ENCODE measurements at regions of chr20 and their contacts with region 1.

Region 1: GRCh38 chr20:53547664-53548239 is 45.9 kb downstream of the ZNF217 start:
- DNase-seq: peak; percentile 76
- ATAC-seq: peak; percentile 94
- H3K4me3 ChIP-seq: no peak overlapping the region
- H3K27ac ChIP-seq: no peak overlapping the region
- H3K4me1 ChIP-seq: peaks cover 6% of the 10 kb centered on the region
- H3K27me3 ChIP-seq: no peaks in the 10 kb centered on the region
- CTCF ChIP-seq: peak; percentile 93
- POLR2A ChIP-seq: no peak
- RAD21 ChIP-seq: peak; percentile 92

Region 2: GRCh38 chr20:52127309-52127708 is 1420.4 kb before region 1 on chr20:
- CTCF ChIA-PET with region 1: no interaction called
- POLR2A ChIA-PET with region 1: no interaction called
- dilution Hi-C with region 1: no loop called
- in situ Hi-C with region 1: no loop called
- intact Hi-C with region 1: loop called (anchors 1 kb)
- DNase-seq: no peak
- ATAC-seq: no peak
- H3K4me3 ChIP-seq: no peak overlapping the region
- H3K27ac ChIP-seq: no peak overlapping the region
- H3K4me1 ChIP-seq: no peaks in the 10 kb centered on the region; the same call in 1 of the 2 replicates
- H3K27me3 ChIP-seq: no peaks in the 10 kb centered on the region
- CTCF ChIP-seq: no peak
- POLR2A ChIP-seq: no peak
- RAD21 ChIP-seq: no peak

Region 3: DNA sequence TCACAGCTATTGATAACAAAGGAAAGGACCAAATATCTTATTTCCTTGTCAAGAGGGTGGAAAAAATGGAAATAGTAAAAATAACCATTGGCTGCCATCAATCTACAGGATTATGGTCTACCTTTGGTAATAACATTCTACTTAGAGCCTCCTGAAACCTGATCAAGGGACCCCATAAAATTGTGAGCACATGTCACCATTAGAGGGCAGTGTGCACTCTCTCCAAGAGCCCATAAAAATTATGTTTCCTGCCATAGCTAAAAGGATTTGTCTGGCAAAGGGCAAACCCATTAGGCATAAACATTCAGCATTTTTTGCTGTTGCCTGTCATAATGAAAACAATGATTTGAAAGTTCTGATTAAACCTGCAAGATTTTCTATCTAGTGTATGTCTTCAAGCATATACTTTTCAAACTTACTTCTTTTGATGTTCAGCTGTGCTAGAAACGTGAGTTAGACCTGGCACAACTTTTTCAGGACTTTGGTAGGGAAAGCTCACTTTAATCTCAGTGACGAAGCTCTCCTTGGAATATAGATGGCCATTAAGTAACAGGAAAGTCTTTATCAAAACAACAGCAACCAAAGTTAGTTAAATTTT is 1235.5 kb before region 1 on chr20:
- CTCF ChIA-PET with region 1: interaction called, 14 read pairs
- POLR2A ChIA-PET with region 1: no interaction called
- dilution Hi-C with region 1: no loop called
- in situ Hi-C with region 1: loop called (anchors 10 kb)
- intact Hi-C with region 1: loop called (anchors 1 kb)
- DNase-seq: peak; percentile 60
- ATAC-seq: peak; percentile 89
- H3K4me3 ChIP-seq: no peak overlapping the region
- H3K27ac ChIP-seq: no peak overlapping the region
- H3K4me1 ChIP-seq: no peaks in the 10 kb centered on the region
- H3K27me3 ChIP-seq: peaks cover 3% of the 10 kb centered on the region
- CTCF ChIP-seq: peak; percentile 76
- POLR2A ChIP-seq: no peak
- RAD21 ChIP-seq: peak; percentile 79

Region 4: GRCh38 chr20:53157443-53158408 is 390.0 kb before region 1 on chr20:
- CTCF ChIA-PET with region 1: interaction called, 3 read pairs
- POLR2A ChIA-PET with region 1: no interaction called
- dilution Hi-C with region 1: no loop called
- in situ Hi-C with region 1: no loop called
- intact Hi-C with region 1: loop called (anchors 1 kb)
- DNase-seq: peak; percentile 53
- ATAC-seq: peak; percentile 63; the same call in 1 of the 2 replicates
- H3K4me3 ChIP-seq: no peak overlapping the region
- H3K27ac ChIP-seq: no peak overlapping the region
- H3K4me1 ChIP-seq: no peaks in the 10 kb centered on the region
- H3K27me3 ChIP-seq: no peaks in the 10 kb centered on the region
- CTCF ChIP-seq: peak; percentile 53
- POLR2A ChIP-seq: no peak
- RAD21 ChIP-seq: peak; percentile 48

Region 5: DNA sequence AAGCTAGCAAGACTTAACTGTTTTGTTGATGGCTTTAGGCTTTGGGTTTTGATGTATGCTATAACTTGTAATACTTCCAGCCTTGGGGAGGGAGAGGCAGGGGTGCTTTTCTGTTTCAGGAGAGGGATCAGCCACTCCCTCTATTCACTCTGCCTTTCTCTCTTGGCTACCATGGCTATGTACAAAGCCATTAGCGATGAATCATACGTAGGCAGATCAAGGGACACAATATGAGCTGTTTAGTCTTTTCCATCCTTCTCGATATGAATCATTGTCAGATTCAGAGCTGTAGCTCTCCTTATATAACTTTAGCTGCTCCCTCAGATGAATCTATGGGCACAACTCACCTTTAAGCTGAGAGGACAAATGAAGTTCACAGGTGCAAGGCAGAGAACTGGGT is 345.0 kb before region 1 on chr20:
- CTCF ChIA-PET with region 1: no interaction called
- POLR2A ChIA-PET with region 1: no interaction called
- dilution Hi-C with region 1: no loop called
- in situ Hi-C with region 1: no loop called
- intact Hi-C with region 1: no loop called
- DNase-seq: no peak
- ATAC-seq: no peak
- H3K4me3 ChIP-seq: no peak overlapping the region
- H3K27ac ChIP-seq: no peak overlapping the region
- H3K4me1 ChIP-seq: no peaks in the 10 kb centered on the region
- H3K27me3 ChIP-seq: no peaks in the 10 kb centered on the region
- CTCF ChIP-seq: no peak
- POLR2A ChIP-seq: no peak
- RAD21 ChIP-seq: no peak

Region 6: DNA sequence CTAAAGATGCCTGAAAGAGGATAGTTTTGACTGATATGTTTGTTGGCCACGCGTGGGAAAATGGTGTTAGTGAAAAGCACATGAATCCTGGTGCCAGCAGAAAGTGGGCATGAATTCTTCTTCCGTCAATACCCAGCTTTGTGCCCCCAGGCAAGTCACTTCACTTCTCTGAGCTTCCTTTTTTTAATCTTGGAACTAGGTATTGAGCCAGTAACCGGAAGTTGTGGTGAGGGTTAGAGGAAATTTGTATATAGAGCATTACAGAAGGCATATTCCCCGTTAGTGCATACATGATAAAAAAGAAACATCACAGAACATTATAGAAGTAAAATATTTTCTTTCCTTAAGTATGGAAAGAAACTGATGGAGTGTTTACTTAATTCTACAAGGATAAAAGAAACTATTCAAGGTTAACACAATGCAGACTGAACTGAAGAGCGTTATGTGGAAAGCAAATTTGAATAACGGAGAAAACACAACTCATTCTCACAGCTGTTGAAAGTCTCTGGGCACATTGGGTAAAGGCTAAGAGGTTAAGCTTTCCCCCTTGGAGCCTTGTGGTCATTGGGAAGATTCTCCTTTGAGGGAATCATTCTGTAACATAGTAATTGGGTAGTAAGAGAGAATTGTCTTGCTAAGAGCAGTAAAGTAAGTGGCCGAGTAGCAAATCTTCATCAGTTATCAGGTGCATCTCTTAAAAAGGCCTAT is 299.5 kb after region 1 on chr20:
- CTCF ChIA-PET with region 1: no interaction called
- POLR2A ChIA-PET with region 1: no interaction called
- dilution Hi-C with region 1: no loop called
- in situ Hi-C with region 1: no loop called
- intact Hi-C with region 1: no loop called
- DNase-seq: no peak
- ATAC-seq: no peak
- H3K4me3 ChIP-seq: no peak overlapping the region
- H3K27ac ChIP-seq: no peak overlapping the region
- H3K4me1 ChIP-seq: no peaks in the 10 kb centered on the region
- H3K27me3 ChIP-seq: no peaks in the 10 kb centered on the region
- CTCF ChIP-seq: no peak
- POLR2A ChIP-seq: no peak
- RAD21 ChIP-seq: no peak

Region 7: GRCh38 chr20:53939572-53940359 is 392.0 kb after region 1 on chr20:
- CTCF ChIA-PET with region 1: interaction called, 7 read pairs
- POLR2A ChIA-PET with region 1: interaction called, 10 read pairs
- dilution Hi-C with region 1: no loop called
- in situ Hi-C with region 1: no loop called
- intact Hi-C with region 1: no loop called
- DNase-seq: peak; percentile 94
- ATAC-seq: peak; percentile 89
- H3K4me3 ChIP-seq: no peak overlapping the region
- H3K27ac ChIP-seq: peak overlapping the region; percentile 66
- H3K4me1 ChIP-seq: peaks cover 16% of the 10 kb centered on the region
- H3K27me3 ChIP-seq: no peaks in the 10 kb centered on the region
- CTCF ChIP-seq: peak; percentile 92
- POLR2A ChIP-seq: 0 out of 2 replicates have a peak, but pooled peaks have one; percentile 61
- RAD21 ChIP-seq: peak; percentile 95

Region 8: DNA sequence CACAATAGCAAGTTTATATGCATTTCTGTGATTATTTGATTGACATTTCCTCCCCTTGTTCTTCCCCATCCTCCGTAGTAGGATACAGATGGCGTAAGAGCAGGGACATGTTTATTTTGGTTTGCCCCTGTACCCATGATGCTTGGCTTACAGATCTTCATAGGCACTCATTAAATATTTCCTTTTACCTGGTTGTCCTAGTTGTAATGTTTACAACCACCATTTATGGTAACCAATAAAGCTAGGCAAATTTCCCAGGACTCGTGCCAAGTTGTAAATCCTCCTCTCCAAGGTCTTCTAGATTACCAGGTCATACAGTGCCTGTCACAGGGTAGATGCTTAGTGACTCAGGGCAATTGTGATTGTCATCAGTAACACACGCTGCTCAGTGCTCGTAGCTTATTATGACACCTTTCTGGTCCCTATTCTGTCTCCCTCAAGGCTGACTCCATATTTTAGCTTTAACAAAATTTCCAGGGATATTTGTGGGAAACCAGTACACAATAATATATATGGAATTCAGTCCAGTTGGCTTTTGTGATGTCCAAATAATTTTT is 601.3 kb after region 1 on chr20:
- CTCF ChIA-PET with region 1: no interaction called
- POLR2A ChIA-PET with region 1: no interaction called
- dilution Hi-C with region 1: no loop called
- in situ Hi-C with region 1: no loop called
- intact Hi-C with region 1: no loop called
- DNase-seq: no peak
- ATAC-seq: no peak
- H3K4me3 ChIP-seq: no peak overlapping the region
- H3K27ac ChIP-seq: no peak overlapping the region
- H3K4me1 ChIP-seq: no peaks in the 10 kb centered on the region
- H3K27me3 ChIP-seq: peaks cover 8% of the 10 kb centered on the region
- CTCF ChIP-seq: no peak
- POLR2A ChIP-seq: no peak
- RAD21 ChIP-seq: no peak

Measured in IMR-90 (cell line).